Heart left ventricle (tissue), 16 donors: ENCODE measurements at regions of chr16 and their contacts with region 1.

Region 1: GRCh38 chr16:67260426-67261075 is 11.8 kb downstream of the SLC9A5 start:
- DNase-seq: peak in 1 of 5 donors; percentile 39
- ATAC-seq: peak; percentile 59 to 86 (median 82)
- H3K4me3 ChIP-seq: no peak overlapping the region
- H3K27ac ChIP-seq: peak overlapping the region in 1 of 12 donors; percentile 7
- H3K4me1 ChIP-seq: peaks cover 0 to 5% (median 2%) of the 10 kb centered on the region in 12 donors
- H3K27me3 ChIP-seq: no peaks in the 10 kb centered on the region
- CTCF ChIP-seq: peak; percentile 34 to 64 (median 55)
- POLR2A ChIP-seq: no peak

Region 2: GRCh38 chr16:67207857-67208519 is 52.6 kb before region 1 on chr16:
- intact Hi-C with region 1: no loop called
- DNase-seq: no peak
- ATAC-seq: no peak
- H3K4me3 ChIP-seq: no peak overlapping the region
- H3K27ac ChIP-seq: no peak overlapping the region
- H3K4me1 ChIP-seq: peaks cover 0 to 3% (median under 1%) of the 10 kb centered on the region in 12 donors
- H3K27me3 ChIP-seq: no peaks in the 10 kb centered on the region
- CTCF ChIP-seq: no peak
- POLR2A ChIP-seq: no peak

Region 3: GRCh38 chr16:67393035-67393787 is 132.7 kb after region 1 on chr16 and contains the start of gene TPPP3:
- intact Hi-C with region 1: loop called in 5 of 10 experiments (anchors 5 to 10 kb)
- DNase-seq: peak; percentile 92 to 95 (median 94)
- ATAC-seq: peak; percentile 70 to 84 (median 80)
- H3K4me3 ChIP-seq: peak within 1 kb of the TSS; percentile 14 to 67 (median 54)
- H3K27ac ChIP-seq: peak within 1 kb of the TSS in 11 of 12 donors; percentile 12 to 82 (median 69)
- H3K4me1 ChIP-seq: peaks cover 5 to 75% (median 50%) of the 10 kb centered on the region in 12 donors
- H3K27me3 ChIP-seq: peaks cover 0 to 28% (median 5%) of the 10 kb centered on the region in 9 donors
- CTCF ChIP-seq: peak; percentile 50 to 88 (median 70)
- POLR2A ChIP-seq: no peak
- total RNA-seq, gene TPPP3: 7.0 to 17.0 (median 10.2) TPM

Region 4: GRCh38 chr16:67399181-67399733 is 138.7 kb after region 1 on chr16:
- intact Hi-C with region 1: loop called in 5 of 10 experiments (anchors 5 to 10 kb)
- DNase-seq: peak in 3 of 5 donors; percentile 45 to 82 (median 65)
- ATAC-seq: peak in 3 of 4 donors; percentile 40 to 46 (median 45)
- H3K4me3 ChIP-seq: peak overlapping the region in 7 of 12 donors; percentile 8 to 40 (median 27)
- H3K27ac ChIP-seq: peak overlapping the region in 2 of 12 donors; percentile 64 to 78
- H3K4me1 ChIP-seq: peaks cover 5 to 56% (median 32%) of the 10 kb centered on the region in 12 donors
- H3K27me3 ChIP-seq: peaks cover 0 to 13% (median 0%) of the 10 kb centered on the region in 9 donors
- CTCF ChIP-seq: peak; percentile 65 to 86 (median 74)
- POLR2A ChIP-seq: no peak

Region 5: GRCh38 chr16:67415872-67416793 is 155.6 kb after region 1 on chr16 and contains the start of gene ZDHHC1:
- intact Hi-C with region 1: loop called in 1 of 10 experiments (anchors 5 kb)
- DNase-seq: peak; percentile 72 to 88 (median 84)
- ATAC-seq: peak; percentile 79 to 98 (median 96)
- H3K4me3 ChIP-seq: peak within 1 kb of the TSS; percentile 44 to 96 (median 86)
- H3K27ac ChIP-seq: peak within 1 kb of the TSS; percentile 35 to 92 (median 82)
- H3K4me1 ChIP-seq: peaks cover 0 to 28% (median 12%) of the 10 kb centered on the region in 12 donors
- H3K27me3 ChIP-seq: no peaks in the 10 kb centered on the region
- CTCF ChIP-seq: peak; percentile 30 to 71 (median 56)
- POLR2A ChIP-seq: peak in 1 of 2 donors; percentile 68
- total RNA-seq, gene ZDHHC1: 3.5 to 11.6 (median 5.4) TPM

Region 6: GRCh38 chr16:67672739-67673662 is 412.4 kb after region 1 on chr16:
- intact Hi-C with region 1: no loop called
- DNase-seq: peak in 4 of 5 donors; percentile 62 to 75 (median 75)
- ATAC-seq: peak; percentile 36 to 69 (median 53)
- H3K4me3 ChIP-seq: peak overlapping the region in 1 of 12 donors; percentile 12
- H3K27ac ChIP-seq: peak overlapping the region; percentile 47 to 91 (median 76)
- H3K4me1 ChIP-seq: peaks cover 8 to 45% (median 26%) of the 10 kb centered on the region in 12 donors
- H3K27me3 ChIP-seq: no peaks in the 10 kb centered on the region
- CTCF ChIP-seq: peak; percentile 65 to 83 (median 76)
- POLR2A ChIP-seq: no peak